ENCODE measurements at regions of chr11 and their contacts with region 1.

Region 1: DNA sequence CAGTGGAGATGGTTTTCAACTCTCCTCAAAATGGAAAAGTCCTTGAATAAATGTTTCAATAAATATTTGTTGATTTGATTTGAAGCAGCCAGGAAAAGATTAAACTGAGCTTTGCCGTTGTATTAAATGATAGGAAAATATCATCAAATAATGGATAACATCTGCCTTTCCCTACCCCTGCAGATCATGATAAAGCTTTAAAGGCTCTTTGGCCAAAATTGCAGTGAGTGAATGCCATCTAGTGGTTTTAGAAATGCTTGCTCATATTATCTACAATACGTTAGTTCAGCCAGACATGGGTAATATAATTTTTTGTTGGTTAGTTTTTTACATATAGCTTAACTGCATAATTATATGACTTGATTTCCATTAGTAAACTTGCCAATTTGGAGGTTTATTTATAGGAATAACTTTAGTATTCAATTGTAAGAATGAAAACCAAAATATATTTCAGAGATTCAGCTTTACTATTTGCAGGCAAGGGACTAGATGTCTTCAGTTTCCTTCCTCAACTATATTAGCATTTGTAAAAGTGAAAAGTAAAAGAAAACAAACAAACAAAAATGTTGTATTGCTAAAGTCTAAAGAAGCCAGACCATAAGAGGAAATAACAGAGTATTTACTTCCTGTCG is 159.2 kb downstream of the MSANTD4 start:
- DNase-seq: peak; percentile 29
- H3K4me3 ChIP-seq: peak overlapping the region in 1 of 2 experiments; percentile 25; a peak in 1 of 4 replicates
- H3K27ac ChIP-seq: no peak overlapping the region
- H3K4me1 ChIP-seq: no peaks in the 10 kb centered on the region; a peak in 1 of 4 replicates
- H3K27me3 ChIP-seq: no peaks in the 10 kb centered on the region
- CTCF ChIP-seq: peak; percentile 80
- EP300 ChIP-seq: peak in 1 of 2 experiments; percentile 64; a peak in 1 of 4 replicates
- RAD21 ChIP-seq: peak; percentile 96

Region 2: DNA sequence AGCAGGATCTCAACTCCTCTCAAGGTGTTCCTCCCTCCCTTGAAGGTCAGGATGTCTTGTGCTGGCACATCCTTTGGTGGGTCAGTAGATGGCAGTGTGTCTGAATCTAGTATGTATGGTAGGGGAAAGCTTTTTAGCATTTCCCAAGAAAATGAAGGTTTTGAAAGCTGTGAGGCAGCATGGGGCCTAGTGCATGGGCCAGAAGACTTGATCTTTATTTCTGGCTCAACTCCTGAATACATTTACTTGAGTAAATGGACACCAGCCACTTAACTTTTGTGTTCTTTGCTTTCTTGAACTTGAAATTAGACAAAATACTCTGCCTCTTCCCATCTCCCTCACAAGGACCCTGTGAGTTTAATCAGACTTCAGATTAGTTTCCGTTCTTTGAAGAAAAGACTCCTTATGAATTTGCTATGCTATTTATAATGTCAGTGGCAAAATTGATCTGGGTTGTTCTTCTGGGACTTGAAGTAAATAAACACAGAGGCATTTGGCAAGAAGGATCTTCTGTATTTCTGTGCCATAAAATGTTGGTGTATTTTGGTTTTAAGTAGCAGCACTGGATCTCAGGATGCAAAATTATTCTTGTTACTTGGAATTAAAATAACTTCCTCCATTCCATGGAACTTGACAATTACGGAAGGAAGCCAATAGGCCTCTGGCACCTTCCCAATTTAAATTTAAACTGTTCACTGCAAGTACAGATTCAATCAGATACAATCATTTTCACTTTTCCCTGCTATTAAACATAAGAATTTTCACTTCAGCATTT is 1253.4 kb before region 1 on chr11:
- CTCF ChIA-PET with region 1: interaction called, 25 read pairs
- POLR2A ChIA-PET with region 1: no interaction called
- DNase-seq: peak; percentile 53
- H3K4me3 ChIP-seq: no peak overlapping the region
- H3K27ac ChIP-seq: no peak overlapping the region
- H3K4me1 ChIP-seq: no peaks in the 10 kb centered on the region; a peak in 1 of 4 replicates
- H3K27me3 ChIP-seq: no peaks in the 10 kb centered on the region
- CTCF ChIP-seq: peak; percentile 74
- EP300 ChIP-seq: no peak
- RAD21 ChIP-seq: peak; percentile 85

Region 3: DNA sequence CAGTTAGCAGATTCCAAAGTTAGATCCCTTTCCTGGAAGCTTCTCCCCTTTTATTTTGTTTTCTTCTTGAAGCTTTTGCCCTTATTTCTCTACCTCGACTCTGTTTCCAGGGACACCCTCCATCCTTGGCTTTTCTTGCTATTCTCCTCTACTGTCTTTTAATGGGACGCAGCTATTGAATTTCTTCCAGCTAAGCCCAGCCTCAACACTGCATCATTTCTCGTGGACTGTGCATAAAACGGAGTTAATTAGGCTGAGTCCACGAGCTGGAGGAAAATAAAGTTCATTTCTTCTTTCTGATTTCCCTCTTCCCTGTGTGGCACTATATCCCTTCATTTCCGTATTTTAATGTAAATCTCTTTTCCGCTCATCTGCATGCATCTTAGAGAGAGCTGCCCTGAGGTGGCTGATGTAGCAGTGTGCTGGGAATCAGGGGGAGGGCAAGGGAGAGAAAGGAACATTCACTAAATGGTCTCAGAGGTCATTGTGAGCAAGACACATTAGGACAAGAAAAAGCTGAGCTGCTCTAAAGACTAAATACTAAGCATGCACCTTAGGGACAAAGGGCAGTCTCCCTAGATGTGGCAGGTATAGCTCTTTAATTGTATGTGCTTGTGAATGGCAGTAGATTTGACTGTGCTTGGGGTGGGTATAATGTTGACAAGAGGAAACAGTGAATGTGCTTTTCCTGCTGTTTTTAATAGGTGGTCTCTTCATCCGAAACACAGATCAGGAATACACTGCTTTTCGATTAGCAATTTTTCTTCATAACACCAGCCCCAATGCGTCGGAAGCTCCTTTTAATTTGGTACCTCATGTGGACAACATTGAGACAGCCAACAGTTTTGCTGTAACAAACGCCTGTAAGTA is 251.0 kb before region 1 on chr11:
- CTCF ChIA-PET with region 1: interaction called, 11 read pairs
- POLR2A ChIA-PET with region 1: no interaction called
- DNase-seq: peak; percentile 19
- H3K4me3 ChIP-seq: peak overlapping the region; percentile 13 to 52; a peak in 2 of 4 replicates
- H3K27ac ChIP-seq: no peak overlapping the region
- H3K4me1 ChIP-seq: peaks cover 0 to 7% of the 10 kb centered on the region in 2 experiments; a peak in 2 of 4 replicates
- H3K27me3 ChIP-seq: peaks cover 34% of the 10 kb centered on the region
- CTCF ChIP-seq: no peak
- EP300 ChIP-seq: no peak
- RAD21 ChIP-seq: no peak

Region 4: DNA sequence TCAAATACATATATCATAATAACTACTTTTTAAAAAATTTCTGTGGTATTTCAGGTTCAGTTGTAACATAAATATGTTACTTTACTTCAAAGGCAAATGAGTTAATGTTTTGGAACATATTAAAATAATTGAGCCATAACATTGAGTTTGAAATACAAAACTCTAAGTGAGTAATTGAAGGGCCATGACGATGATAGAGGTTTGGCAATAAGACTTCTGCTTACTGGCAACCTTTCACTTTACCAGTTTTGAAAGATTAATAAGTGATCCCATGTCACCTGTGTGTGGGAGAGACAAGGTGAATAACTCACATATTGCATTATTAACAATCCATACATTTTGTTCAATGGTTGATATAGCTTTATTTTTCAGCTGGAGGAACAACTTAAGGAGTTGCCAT is 108.6 kb before region 1 on chr11:
- CTCF ChIA-PET with region 1: no interaction called
- POLR2A ChIA-PET with region 1: no interaction called
- DNase-seq: no peak
- H3K4me3 ChIP-seq: no peak overlapping the region
- H3K27ac ChIP-seq: no peak overlapping the region
- H3K4me1 ChIP-seq: no peaks in the 10 kb centered on the region
- H3K27me3 ChIP-seq: no peaks in the 10 kb centered on the region
- CTCF ChIP-seq: no peak
- EP300 ChIP-seq: no peak
- RAD21 ChIP-seq: no peak

Region 5: DNA sequence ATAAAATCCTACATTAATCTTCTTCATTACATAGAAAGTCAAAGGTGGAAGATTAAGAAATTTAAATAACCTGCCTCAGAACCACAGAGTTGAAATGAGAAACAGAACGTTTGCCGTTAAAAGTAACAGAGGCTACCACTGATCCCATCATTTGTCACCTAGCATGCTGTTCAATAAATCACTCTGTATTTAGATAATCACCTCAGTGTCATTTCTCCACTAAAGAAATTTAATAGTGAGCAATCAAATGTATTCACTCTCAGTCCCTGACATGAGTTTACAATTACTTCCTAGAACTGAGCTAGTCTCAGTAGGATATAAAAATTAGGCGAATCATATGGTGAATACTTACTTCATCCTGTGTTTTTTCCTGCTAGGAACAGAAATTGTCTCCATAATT is 10.4 kb before region 1 on chr11:
- CTCF ChIA-PET with region 1: interaction called, 16 read pairs
- POLR2A ChIA-PET with region 1: no interaction called
- DNase-seq: no peak
- H3K4me3 ChIP-seq: no peak overlapping the region
- H3K27ac ChIP-seq: no peak overlapping the region
- H3K4me1 ChIP-seq: no peaks in the 10 kb centered on the region
- H3K27me3 ChIP-seq: no peaks in the 10 kb centered on the region
- CTCF ChIP-seq: no peak
- EP300 ChIP-seq: no peak
- RAD21 ChIP-seq: no peak